Calu3 (cell line): ENCODE measurements at regions of chr4 and their contacts with region 1.

Region 1: GRCh38 chr4:102620697-102621497 is 119.7 kb downstream of the NFKB1 start:
- DNase-seq: peak; percentile 55
- H3K4me3 Mint-ChIP-seq: peak overlapping the region; percentile 60
- H3K27ac Mint-ChIP-seq: peak overlapping the region; percentile 80
- H3K4me1 Mint-ChIP-seq: peaks cover 47% of the 10 kb centered on the region
- H3K27me3 Mint-ChIP-seq: no peaks in the 10 kb centered on the region
- CTCF ChIP-seq: peak; percentile 30

Region 2: GRCh38 chr4:102449751-102450352 is 171.0 kb before region 1 on chr4:
- CTCF ChIA-PET with region 1: no interaction called
- intact Hi-C with region 1: loop called (anchors 5 kb)
- DNase-seq: peak; percentile 27
- H3K4me3 Mint-ChIP-seq: no peak overlapping the region
- H3K27ac Mint-ChIP-seq: no peak overlapping the region
- H3K4me1 Mint-ChIP-seq: no peaks in the 10 kb centered on the region
- H3K27me3 Mint-ChIP-seq: no peaks in the 10 kb centered on the region
- CTCF ChIP-seq: peak; percentile 28

Region 3: GRCh38 chr4:102717448-102718092 is 96.7 kb after region 1 on chr4:
- CTCF ChIA-PET with region 1: interaction called, 5 read pairs
- intact Hi-C with region 1: loop called (anchors 10 kb)
- DNase-seq: peak; percentile 24
- H3K4me3 Mint-ChIP-seq: no peak overlapping the region
- H3K27ac Mint-ChIP-seq: peak overlapping the region; percentile 49
- H3K4me1 Mint-ChIP-seq: peaks cover 21% of the 10 kb centered on the region
- H3K27me3 Mint-ChIP-seq: no peaks in the 10 kb centered on the region
- CTCF ChIP-seq: no peak

Region 4: DNA sequence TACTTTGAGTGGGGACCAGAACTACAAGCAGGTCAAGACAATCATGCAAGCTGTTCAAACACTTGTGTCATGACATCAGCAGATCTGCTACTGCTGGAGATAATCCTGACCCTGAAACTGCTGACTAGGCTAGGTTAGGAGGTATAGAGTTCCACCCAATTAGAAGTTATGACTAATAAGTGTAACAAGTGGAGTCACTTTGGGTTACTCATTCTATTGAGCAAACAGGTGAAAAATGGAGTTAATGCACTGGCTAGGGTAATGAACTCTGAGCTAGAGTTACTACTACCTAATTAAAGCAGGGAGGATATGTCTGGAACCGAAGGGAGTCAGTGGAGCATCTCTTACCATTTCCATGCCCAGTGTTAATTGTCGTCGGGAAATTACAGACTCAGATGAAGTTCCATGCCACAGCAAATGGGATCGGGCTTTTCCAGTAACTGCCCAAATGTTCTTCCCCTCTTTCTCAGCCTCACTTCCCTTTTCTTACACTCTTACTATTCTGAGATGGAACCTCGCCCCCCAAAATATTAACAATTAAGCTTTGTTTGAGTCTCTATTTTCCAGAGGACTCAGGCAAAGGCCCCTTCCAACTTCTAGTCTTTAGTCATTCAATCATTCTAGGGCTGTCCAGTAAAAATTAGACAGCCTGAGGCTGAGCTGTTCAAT is 159.7 kb after region 1 on chr4:
- CTCF ChIA-PET with region 1: no interaction called
- intact Hi-C with region 1: loop called (anchors 10 kb)
- DNase-seq: no peak
- H3K4me3 Mint-ChIP-seq: no peak overlapping the region
- H3K27ac Mint-ChIP-seq: no peak overlapping the region
- H3K4me1 Mint-ChIP-seq: peaks cover 23% of the 10 kb centered on the region
- H3K27me3 Mint-ChIP-seq: no peaks in the 10 kb centered on the region
- CTCF ChIP-seq: no peak

Region 5: GRCh38 chr4:102826890-102827673 is 206.2 kb after region 1 on chr4 and contains the start of gene UBE2D3:
- CTCF ChIA-PET with region 1: interaction called, 11 read pairs
- intact Hi-C with region 1: loop called (anchors 5 kb)
- DNase-seq: peak; percentile 93
- H3K4me3 Mint-ChIP-seq: no peak within 1 kb of the TSS
- H3K27ac Mint-ChIP-seq: no peak within 1 kb of the TSS
- H3K4me1 Mint-ChIP-seq: peaks cover 6% of the 10 kb centered on the region
- H3K27me3 Mint-ChIP-seq: no peaks in the 10 kb centered on the region
- CTCF ChIP-seq: no peak
- total RNA-seq, gene UBE2D3: 235 and 243 TPM in 2 replicates

Region 6: DNA sequence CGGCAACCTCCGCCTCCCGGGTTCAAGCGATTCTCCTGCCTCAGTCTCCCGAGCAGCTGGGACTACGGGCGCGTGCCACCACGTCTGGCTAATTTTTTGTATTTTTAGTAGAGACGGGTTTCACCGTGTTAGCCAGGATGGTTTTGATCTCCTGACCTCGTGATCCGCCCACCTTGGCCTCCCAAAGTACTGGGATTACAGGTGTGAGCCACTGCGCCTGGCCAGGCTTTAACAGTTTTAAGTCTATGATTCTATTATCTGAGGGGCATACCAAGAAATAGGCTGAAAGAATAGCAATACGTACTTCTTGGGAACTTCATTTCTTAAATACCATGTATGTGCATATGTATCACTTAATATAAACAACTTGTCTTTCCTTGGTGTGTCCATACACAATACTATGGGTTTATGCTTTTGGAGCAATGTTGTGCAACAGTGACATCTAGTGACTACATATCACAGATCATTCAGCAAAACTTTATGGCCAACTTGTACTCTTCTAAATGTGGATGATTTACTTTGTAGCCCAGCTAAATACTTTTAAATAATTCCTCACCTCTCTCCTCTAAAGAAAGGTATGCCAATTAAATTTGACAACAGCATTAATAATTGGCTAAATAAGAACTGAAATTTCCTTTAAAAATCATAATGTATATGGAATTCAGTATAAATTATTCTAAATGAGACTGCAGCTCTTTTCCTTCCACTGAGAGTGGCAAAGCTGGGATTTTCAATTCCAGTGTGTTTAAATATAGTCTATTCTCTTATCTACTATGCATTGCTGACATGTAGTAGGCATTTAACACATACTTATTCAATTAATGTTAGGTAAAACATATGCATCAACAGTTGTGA is 388.2 kb after region 1 on chr4:
- CTCF ChIA-PET with region 1: interaction called, 8 read pairs
- intact Hi-C with region 1: loop called (anchors 1 kb)
- DNase-seq: peak; percentile 25
- H3K4me3 Mint-ChIP-seq: no peak overlapping the region
- H3K27ac Mint-ChIP-seq: no peak overlapping the region
- H3K4me1 Mint-ChIP-seq: peaks cover 13% of the 10 kb centered on the region
- H3K27me3 Mint-ChIP-seq: no peaks in the 10 kb centered on the region
- CTCF ChIP-seq: peak; percentile 23

Region 7: GRCh38 chr4:103091601-103092223 is 470.8 kb after region 1 on chr4:
- CTCF ChIA-PET with region 1: no interaction called
- intact Hi-C with region 1: loop called (anchors 1 kb)
- DNase-seq: peak; percentile 38
- H3K4me3 Mint-ChIP-seq: no peak overlapping the region
- H3K27ac Mint-ChIP-seq: no peak overlapping the region
- H3K4me1 Mint-ChIP-seq: peaks cover 3% of the 10 kb centered on the region
- H3K27me3 Mint-ChIP-seq: no peaks in the 10 kb centered on the region
- CTCF ChIP-seq: peak; percentile 30

Region 8: DNA sequence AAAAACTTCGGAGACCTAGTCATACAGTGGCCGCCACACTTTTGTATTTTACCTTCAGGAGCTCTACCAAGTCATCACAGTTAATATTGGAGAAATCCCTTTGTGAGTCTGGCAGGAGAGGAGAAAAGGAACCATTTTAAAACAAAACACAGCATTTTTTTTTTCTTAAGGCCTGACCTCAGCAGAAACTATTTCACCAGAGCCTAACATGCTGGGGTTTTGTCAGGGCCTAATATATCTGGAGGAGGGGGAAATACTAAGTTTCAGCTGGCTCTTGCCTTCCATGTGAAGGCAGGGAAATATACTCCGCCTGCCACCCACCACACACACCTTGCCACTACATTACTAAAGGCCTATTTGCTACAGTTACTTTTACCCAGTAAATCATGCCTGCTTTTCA is 505.2 kb after region 1 on chr4:
- CTCF ChIA-PET with region 1: no interaction called
- intact Hi-C with region 1: no loop called
- DNase-seq: no peak
- H3K4me3 Mint-ChIP-seq: no peak overlapping the region
- H3K27ac Mint-ChIP-seq: no peak overlapping the region
- H3K4me1 Mint-ChIP-seq: no peaks in the 10 kb centered on the region
- H3K27me3 Mint-ChIP-seq: no peaks in the 10 kb centered on the region
- CTCF ChIP-seq: no peak